IMR-90 (cell line): ENCODE measurements at regions of chr17 and their contacts with region 1.

Region 1: GRCh38 chr17:9924735-9925191 is 19.7 kb upstream of the RCVRN start:
- DNase-seq: peak; percentile 75
- ATAC-seq: peak; percentile 82
- H3K4me3 ChIP-seq: no peak overlapping the region
- H3K27ac ChIP-seq: no peak overlapping the region
- H3K4me1 ChIP-seq: peaks cover 6% of the 10 kb centered on the region; the same call in 1 of the 2 replicates
- H3K27me3 ChIP-seq: no peaks in the 10 kb centered on the region
- CTCF ChIP-seq: peak; percentile 91
- POLR2A ChIP-seq: no peak
- RAD21 ChIP-seq: peak; percentile 91

Region 2: GRCh38 chr17:9729034-9729650 is 195.6 kb before region 1 on chr17:
- CTCF ChIA-PET with region 1: interaction called, 6 read pairs
- POLR2A ChIA-PET with region 1: no interaction called
- dilution Hi-C with region 1: no loop called
- in situ Hi-C with region 1: no loop called
- intact Hi-C with region 1: loop called (anchors 1 kb)
- DNase-seq: peak; percentile 45
- ATAC-seq: peak; percentile 77
- H3K4me3 ChIP-seq: no peak overlapping the region
- H3K27ac ChIP-seq: no peak overlapping the region
- H3K4me1 ChIP-seq: no peaks in the 10 kb centered on the region
- H3K27me3 ChIP-seq: peaks cover 3% of the 10 kb centered on the region; the same call in 1 of the 2 replicates
- CTCF ChIP-seq: peak; percentile 85
- POLR2A ChIP-seq: no peak
- RAD21 ChIP-seq: peak; percentile 81

Region 3: GRCh38 chr17:9959377-9959981 is 34.7 kb after region 1 on chr17:
- CTCF ChIA-PET with region 1: interaction called, 6 read pairs
- POLR2A ChIA-PET with region 1: no interaction called
- dilution Hi-C with region 1: no loop called
- in situ Hi-C with region 1: no loop called
- intact Hi-C with region 1: loop called (anchors 1 kb)
- DNase-seq: peak; percentile 49
- ATAC-seq: peak; percentile 94
- H3K4me3 ChIP-seq: no peak overlapping the region
- H3K27ac ChIP-seq: no peak overlapping the region
- H3K4me1 ChIP-seq: no peaks in the 10 kb centered on the region
- H3K27me3 ChIP-seq: no peaks in the 10 kb centered on the region
- CTCF ChIP-seq: peak; percentile 59
- POLR2A ChIP-seq: no peak
- RAD21 ChIP-seq: peak; percentile 57

Region 4: DNA sequence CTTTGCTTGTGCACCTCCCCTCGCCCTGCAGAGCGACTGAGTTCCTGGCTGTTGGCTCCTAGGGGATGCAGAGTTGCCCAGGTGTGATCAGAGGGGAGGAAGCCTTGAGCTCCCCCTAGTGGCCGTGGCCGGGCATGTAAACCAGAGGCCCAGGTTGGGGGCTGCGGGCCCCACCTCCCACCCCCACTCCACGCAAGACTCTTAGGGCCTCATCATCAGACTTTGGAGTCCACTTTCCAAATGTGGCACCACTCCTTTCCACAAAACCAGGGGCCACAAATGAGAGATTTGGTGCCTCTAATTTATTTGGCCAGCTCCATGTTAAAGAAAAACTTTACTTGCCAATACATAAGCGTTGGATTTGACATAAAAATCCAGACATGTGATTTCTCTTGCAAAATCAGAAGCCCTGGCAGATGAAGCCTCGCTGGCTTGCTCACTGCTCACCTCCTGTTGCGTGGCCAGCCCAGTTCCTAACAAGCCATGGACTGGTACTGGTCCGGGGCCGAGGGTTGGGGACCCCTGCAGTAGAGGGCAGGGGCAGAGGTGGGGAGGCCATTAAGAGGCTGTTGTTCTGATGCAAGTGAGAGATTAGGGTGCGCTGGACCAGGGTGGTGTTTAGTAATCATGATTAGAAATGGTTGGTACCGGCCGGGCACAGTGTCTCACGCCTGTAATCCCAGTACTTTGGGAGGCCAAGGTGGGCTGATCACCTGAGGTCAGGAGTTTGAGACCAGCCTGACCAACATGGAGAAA is 302.3 kb after region 1 on chr17:
- CTCF ChIA-PET with region 1: interaction called, 3 read pairs
- POLR2A ChIA-PET with region 1: no interaction called
- dilution Hi-C with region 1: no loop called
- in situ Hi-C with region 1: no loop called
- intact Hi-C with region 1: loop called (anchors 2 kb)
- DNase-seq: peak; percentile 22
- ATAC-seq: peak; percentile 82
- H3K4me3 ChIP-seq: no peak overlapping the region
- H3K27ac ChIP-seq: no peak overlapping the region
- H3K4me1 ChIP-seq: peaks cover 2% of the 10 kb centered on the region; the same call in 1 of the 2 replicates
- H3K27me3 ChIP-seq: no peaks in the 10 kb centered on the region
- CTCF ChIP-seq: peak; percentile 73
- POLR2A ChIP-seq: no peak
- RAD21 ChIP-seq: peak; percentile 76

Region 5: GRCh38 chr17:10295728-10296343 is 371.1 kb after region 1 on chr17:
- CTCF ChIA-PET with region 1: no interaction called
- POLR2A ChIA-PET with region 1: no interaction called
- dilution Hi-C with region 1: no loop called
- in situ Hi-C with region 1: no loop called
- intact Hi-C with region 1: loop called (anchors 1 kb)
- DNase-seq: peak; percentile 33
- ATAC-seq: peak; percentile 73
- H3K4me3 ChIP-seq: no peak overlapping the region
- H3K27ac ChIP-seq: no peak overlapping the region
- H3K4me1 ChIP-seq: no peaks in the 10 kb centered on the region; the same call in 1 of the 2 replicates
- H3K27me3 ChIP-seq: 0 out of 2 replicates have a peak, but pooled peaks cover 2% of the 10 kb centered on the region
- CTCF ChIP-seq: peak; percentile 66
- POLR2A ChIP-seq: no peak
- RAD21 ChIP-seq: peak; percentile 61

Region 6: DNA sequence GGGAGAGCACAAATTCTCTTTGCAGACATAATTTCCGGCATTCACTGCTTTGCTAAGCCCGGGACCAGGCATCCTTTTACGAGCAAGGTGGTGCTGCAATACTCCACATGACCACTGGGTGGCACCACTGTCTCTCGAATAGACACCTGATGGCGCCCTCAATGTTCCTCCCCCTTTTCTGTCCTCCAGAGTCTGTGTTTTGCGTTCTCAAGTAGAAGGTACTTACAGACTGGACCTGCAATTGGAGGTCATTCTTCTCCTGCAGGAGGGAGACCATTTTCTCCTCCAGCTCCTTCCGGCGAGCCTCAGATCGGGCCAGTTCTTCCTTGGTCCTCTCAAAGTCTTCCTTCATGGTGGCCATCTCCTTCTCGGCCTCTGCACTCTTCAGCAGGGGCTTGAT is 402.9 kb after region 1 on chr17:
- CTCF ChIA-PET with region 1: no interaction called
- POLR2A ChIA-PET with region 1: no interaction called
- dilution Hi-C with region 1: no loop called
- in situ Hi-C with region 1: no loop called
- intact Hi-C with region 1: loop called (anchors 1 kb)
- DNase-seq: peak; percentile 73
- ATAC-seq: peak; percentile 97
- H3K4me3 ChIP-seq: no peak overlapping the region
- H3K27ac ChIP-seq: no peak overlapping the region
- H3K4me1 ChIP-seq: no peaks in the 10 kb centered on the region
- H3K27me3 ChIP-seq: peaks cover 1% of the 10 kb centered on the region; the same call in 1 of the 2 replicates
- CTCF ChIP-seq: peak; percentile 81
- POLR2A ChIP-seq: no peak
- RAD21 ChIP-seq: peak; percentile 83